PC-3 (cell line): ENCODE measurements at regions of chr7 and their contacts with region 1.

Region 1: DNA sequence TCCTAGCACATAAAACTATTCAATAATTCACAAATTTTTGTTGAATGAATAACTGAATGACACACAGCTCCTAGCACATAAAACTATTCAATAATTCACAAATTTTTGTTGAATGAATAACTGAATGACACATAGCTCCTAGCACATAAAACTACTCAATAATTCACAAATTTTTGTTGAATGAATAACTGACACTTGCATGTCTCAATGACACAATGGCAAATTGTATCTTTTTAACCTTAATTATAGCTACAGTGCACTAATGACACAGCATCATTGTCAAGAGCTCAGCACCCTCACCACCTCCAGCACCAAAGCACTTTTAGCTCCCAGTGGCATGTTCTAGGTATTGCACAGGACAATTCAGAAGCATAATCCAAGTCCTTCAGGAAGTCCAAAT is 131.6 kb downstream of the PDE1C start:
- DNase-seq: peak; percentile 85
- ATAC-seq: peak; percentile 71
- H3K4me3 ChIP-seq: no peak overlapping the region
- H3K27ac ChIP-seq: peak overlapping the region; percentile 63
- H3K4me1 ChIP-seq: peaks cover 63% of the 10 kb centered on the region
- H3K27me3 ChIP-seq: no peaks in the 10 kb centered on the region
- CTCF ChIP-seq: peak; percentile 49

Region 2: DNA sequence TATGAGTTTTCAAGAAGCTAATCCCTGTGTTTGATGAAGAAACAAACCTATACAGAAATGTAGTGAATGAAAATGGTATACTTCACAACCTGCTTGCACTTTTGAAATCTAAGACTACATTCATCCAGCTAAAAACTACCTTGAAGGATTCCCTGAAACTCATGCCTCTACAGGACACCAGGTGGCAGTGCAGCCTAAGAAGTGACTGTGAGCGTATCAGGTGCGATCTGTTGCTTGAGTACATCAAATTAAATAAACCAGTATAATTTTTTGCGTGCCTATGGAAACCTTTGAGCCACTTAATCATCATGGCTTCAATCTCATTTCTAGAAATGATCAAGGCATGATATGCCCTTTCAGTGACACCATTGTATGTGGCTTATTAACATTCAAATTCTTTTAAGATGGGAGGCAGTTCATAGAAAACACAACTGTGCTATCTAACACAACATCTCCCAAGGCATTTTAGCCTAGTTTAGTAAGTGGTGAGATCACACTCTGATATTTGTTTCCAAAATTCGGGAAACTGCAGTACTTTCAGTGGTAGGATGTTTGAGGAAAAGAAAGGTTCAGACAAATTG is 194.3 kb before region 1 on chr7:
- CTCF ChIA-PET with region 1: no interaction called
- POLR2A ChIA-PET with region 1: no interaction called
- intact Hi-C with region 1: loop called (anchors 1 kb)
- DNase-seq: peak; percentile 85
- ATAC-seq: peak; percentile 73
- H3K4me3 ChIP-seq: no peak overlapping the region
- H3K27ac ChIP-seq: no peak overlapping the region
- H3K4me1 ChIP-seq: peaks cover 25% of the 10 kb centered on the region
- H3K27me3 ChIP-seq: no peaks in the 10 kb centered on the region
- CTCF ChIP-seq: peak; percentile 94

Region 3: DNA sequence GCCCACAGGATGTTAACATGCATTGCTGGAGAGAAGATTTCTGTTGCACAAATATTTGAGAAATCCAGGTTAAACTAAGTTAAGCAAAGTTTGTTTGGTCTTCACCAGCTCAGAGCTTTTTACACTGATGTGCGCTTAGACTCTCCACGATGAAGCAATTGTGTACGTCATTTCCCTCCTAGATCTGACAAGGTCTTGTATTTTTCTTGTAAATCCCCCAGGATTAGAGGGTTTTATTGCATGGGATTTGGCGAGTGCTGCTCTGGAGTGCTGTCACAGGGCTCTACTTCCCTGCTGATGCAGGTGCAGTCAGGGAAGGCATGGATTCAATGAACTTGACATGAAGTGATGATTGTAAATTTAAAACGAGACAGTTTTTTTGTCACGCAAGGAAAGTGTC is 41.7 kb before region 1 on chr7:
- CTCF ChIA-PET with region 1: no interaction called
- POLR2A ChIA-PET with region 1: no interaction called
- intact Hi-C with region 1: loop called (anchors 2 kb)
- DNase-seq: no peak
- ATAC-seq: no peak
- H3K4me3 ChIP-seq: no peak overlapping the region
- H3K27ac ChIP-seq: no peak overlapping the region
- H3K4me1 ChIP-seq: peaks cover 15% of the 10 kb centered on the region
- H3K27me3 ChIP-seq: no peaks in the 10 kb centered on the region
- CTCF ChIP-seq: no peak

Region 4: GRCh38 chr7:31910191-31910590 is 28.5 kb before region 1 on chr7:
- CTCF ChIA-PET with region 1: no interaction called
- POLR2A ChIA-PET with region 1: no interaction called
- intact Hi-C with region 1: no loop called
- DNase-seq: no peak
- ATAC-seq: no peak
- H3K4me3 ChIP-seq: no peak overlapping the region
- H3K27ac ChIP-seq: no peak overlapping the region
- H3K4me1 ChIP-seq: no peaks in the 10 kb centered on the region
- H3K27me3 ChIP-seq: no peaks in the 10 kb centered on the region
- CTCF ChIP-seq: no peak

Region 5: DNA sequence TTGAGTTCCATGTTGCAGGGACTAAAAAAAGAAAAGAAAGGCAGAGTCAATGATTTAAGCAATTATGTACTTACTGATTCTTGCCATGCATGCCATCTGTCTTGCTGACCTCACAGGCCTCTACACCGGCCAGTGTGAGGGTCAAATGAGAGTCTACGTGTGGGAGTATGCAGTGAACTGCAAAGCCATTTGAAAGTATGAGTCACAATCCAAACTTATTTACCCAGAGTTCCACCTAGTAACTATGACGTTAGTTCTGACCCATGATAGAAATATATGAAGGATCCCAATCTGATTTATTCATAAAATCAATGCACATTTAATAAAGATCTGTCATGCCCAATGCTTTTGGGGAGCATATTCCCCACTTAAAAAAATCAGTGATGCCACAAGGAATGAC is 105.1 kb after region 1 on chr7:
- CTCF ChIA-PET with region 1: no interaction called
- POLR2A ChIA-PET with region 1: no interaction called
- intact Hi-C with region 1: loop called (anchors 5 kb)
- DNase-seq: peak; percentile 83
- ATAC-seq: peak; percentile 72
- H3K4me3 ChIP-seq: peak overlapping the region; percentile 8; the same call in 1 of the 2 replicates
- H3K27ac ChIP-seq: peak overlapping the region; percentile 93
- H3K4me1 ChIP-seq: peaks cover 66% of the 10 kb centered on the region
- H3K27me3 ChIP-seq: no peaks in the 10 kb centered on the region
- CTCF ChIP-seq: no peak

Region 6: GRCh38 chr7:32164346-32164957 is 225.8 kb after region 1 on chr7:
- CTCF ChIA-PET with region 1: interaction called, 8 read pairs
- POLR2A ChIA-PET with region 1: interaction called, 3 read pairs
- intact Hi-C with region 1: loop called (anchors 5 kb)
- DNase-seq: peak; percentile 85
- ATAC-seq: peak; percentile 53
- H3K4me3 ChIP-seq: no peak overlapping the region
- H3K27ac ChIP-seq: peak overlapping the region; percentile 87; the same call in 1 of the 2 replicates
- H3K4me1 ChIP-seq: peaks cover 39% of the 10 kb centered on the region
- H3K27me3 ChIP-seq: no peaks in the 10 kb centered on the region
- CTCF ChIP-seq: peak; percentile 84

Region 7: GRCh38 chr7:32266932-32267475 is 328.4 kb after region 1 on chr7:
- CTCF ChIA-PET with region 1: no interaction called
- POLR2A ChIA-PET with region 1: no interaction called
- intact Hi-C with region 1: no loop called
- DNase-seq: no peak
- ATAC-seq: no peak; the same call in 1 of the 2 replicates
- H3K4me3 ChIP-seq: no peak overlapping the region
- H3K27ac ChIP-seq: no peak overlapping the region
- H3K4me1 ChIP-seq: no peaks in the 10 kb centered on the region
- H3K27me3 ChIP-seq: peaks cover 90% of the 10 kb centered on the region
- CTCF ChIP-seq: no peak